ENCODE measurements at regions of chr7 and their contacts with region 1.

Region 1: GRCh38 chr7:27774717-27775328 is 34.9 kb downstream of the TAX1BP1 start:
- DNase-seq: peak; percentile 12
- ATAC-seq: no peak
- H3K4me3 ChIP-seq: no peak overlapping the region
- H3K27ac ChIP-seq: no peak overlapping the region
- H3K4me1 ChIP-seq: peaks cover 15 to 25% of the 10 kb centered on the region in 2 experiments
- H3K27me3 ChIP-seq: no peaks in the 10 kb centered on the region
- CTCF ChIP-seq: peak; percentile 52 to 70 (median 58); a peak in 5 of 6 replicates
- POLR2A ChIP-seq: no peak
- RAD21 ChIP-seq: peak; percentile 69

Region 2: DNA sequence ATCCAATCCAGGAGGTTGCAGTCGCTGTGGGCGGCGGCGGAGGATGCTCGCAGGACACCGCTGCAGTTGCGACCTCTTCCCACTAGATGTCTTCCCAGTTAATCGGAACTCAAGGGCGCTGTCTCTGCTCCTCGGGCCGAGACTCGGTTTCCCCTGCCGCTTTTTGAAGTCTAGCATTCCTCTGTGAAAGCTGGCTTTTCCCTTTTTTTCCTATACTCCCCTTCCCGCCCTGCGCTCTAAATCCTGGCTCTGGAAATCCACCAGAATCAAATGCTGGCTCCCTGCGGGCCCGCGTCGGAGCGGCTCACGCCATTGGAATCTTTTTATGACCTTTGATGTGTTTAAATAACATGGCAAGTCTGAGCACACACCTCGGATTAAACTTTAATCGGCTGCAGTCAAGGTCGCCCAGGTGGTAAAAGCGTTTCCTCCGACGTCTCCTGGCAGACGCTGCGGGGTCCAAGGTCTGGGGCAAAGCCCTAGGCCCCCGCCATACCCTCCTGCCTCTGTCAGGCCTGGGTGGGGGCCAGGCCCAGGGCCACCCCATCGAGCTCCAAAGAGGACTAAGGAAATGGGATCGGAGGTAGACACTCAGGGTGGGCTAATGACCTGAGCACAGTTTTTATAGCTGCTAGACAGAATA is 564.3 kb before region 1 on chr7:
- CTCF ChIA-PET with region 1: no interaction called
- POLR2A ChIA-PET with region 1: no interaction called
- RAD21 ChIA-PET with region 1: no interaction called
- intact Hi-C with region 1: loop called (anchors 2 kb)
- DNase-seq: no peak
- ATAC-seq: peak; percentile 95
- H3K4me3 ChIP-seq: peak overlapping the region; percentile 28 to 43
- H3K27ac ChIP-seq: no peak overlapping the region
- H3K4me1 ChIP-seq: peaks cover 4 to 14% of the 10 kb centered on the region in 2 experiments; a peak in 3 of 4 replicates
- H3K27me3 ChIP-seq: no peaks in the 10 kb centered on the region
- CTCF ChIP-seq: peak; percentile 75 to 80 (median 78)
- POLR2A ChIP-seq: no peak
- RAD21 ChIP-seq: peak; percentile 80

Region 3: DNA sequence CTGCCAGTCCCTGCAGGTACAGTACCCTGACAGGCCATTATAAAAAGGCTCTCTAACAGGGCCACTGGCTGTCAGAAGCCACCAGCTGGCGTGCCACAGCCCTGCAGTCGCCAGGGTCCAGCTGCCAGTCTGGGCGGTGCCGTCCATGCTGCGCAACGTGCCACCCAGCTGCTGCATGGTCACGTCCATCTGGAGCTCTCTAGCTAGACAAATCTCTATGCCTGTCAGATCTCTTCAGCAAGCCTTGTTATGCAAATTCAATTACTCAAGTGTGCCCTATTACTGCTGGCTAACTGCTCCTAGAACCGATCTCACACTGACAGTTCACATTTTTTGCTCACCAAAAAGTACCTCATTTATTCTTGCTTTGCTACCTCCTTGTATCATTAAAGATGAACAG is 188.0 kb before region 1 on chr7:
- CTCF ChIA-PET with region 1: no interaction called
- POLR2A ChIA-PET with region 1: no interaction called
- RAD21 ChIA-PET with region 1: no interaction called
- intact Hi-C with region 1: loop called (anchors 10 kb)
- DNase-seq: no peak
- ATAC-seq: no peak; the same call in 1 of the 2 replicates
- H3K4me3 ChIP-seq: no peak overlapping the region
- H3K27ac ChIP-seq: no peak overlapping the region
- H3K4me1 ChIP-seq: no peaks in the 10 kb centered on the region
- H3K27me3 ChIP-seq: no peaks in the 10 kb centered on the region
- CTCF ChIP-seq: no peak
- POLR2A ChIP-seq: no peak
- RAD21 ChIP-seq: no peak

Region 4: GRCh38 chr7:27689591-27690164 is 85.1 kb before region 1 on chr7:
- CTCF ChIA-PET with region 1: interaction called, 6 read pairs
- POLR2A ChIA-PET with region 1: no interaction called
- RAD21 ChIA-PET with region 1: interaction called in 1 of 2 experiments, 4 read pairs
- intact Hi-C with region 1: loop called (anchors 5 kb)
- DNase-seq: no peak
- ATAC-seq: peak; percentile 95
- H3K4me3 ChIP-seq: no peak overlapping the region
- H3K27ac ChIP-seq: no peak overlapping the region
- H3K4me1 ChIP-seq: peaks cover 0 to 13% of the 10 kb centered on the region in 2 experiments; a peak in 2 of 4 replicates
- H3K27me3 ChIP-seq: no peaks in the 10 kb centered on the region
- CTCF ChIP-seq: peak; percentile 53 to 69 (median 66)
- POLR2A ChIP-seq: no peak
- RAD21 ChIP-seq: peak; percentile 85

Region 5: DNA sequence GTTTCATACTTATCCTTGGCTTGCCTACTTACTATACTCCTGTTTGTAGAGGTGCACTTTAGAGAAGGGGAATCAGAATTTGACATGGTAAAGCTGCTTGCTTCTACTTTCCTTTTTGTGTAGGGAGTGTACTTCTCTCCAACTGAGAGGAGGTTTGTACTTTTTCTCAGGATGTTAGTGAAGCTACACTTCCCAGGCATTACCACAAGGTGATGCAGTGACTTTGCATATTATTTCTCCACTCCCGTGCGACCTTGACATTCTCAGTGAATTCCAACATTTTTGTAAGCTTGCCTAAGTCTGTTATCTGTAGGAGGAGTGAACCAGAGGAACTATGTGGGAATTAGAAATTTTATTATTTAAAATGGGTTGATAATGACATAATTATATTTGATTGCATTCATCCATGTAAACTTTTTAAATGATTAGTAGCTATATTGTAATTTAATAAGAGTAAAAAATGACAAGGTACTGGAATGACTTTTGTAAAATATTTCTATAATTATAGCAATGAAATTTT is 29.7 kb before region 1 on chr7:
- CTCF ChIA-PET with region 1: interaction called, 22 read pairs
- POLR2A ChIA-PET with region 1: interaction called, 5 read pairs
- RAD21 ChIA-PET with region 1: interaction called, 4 to 5 read pairs
- intact Hi-C with region 1: no loop called
- DNase-seq: peak; percentile 48
- ATAC-seq: peak; percentile 55
- H3K4me3 ChIP-seq: no peak overlapping the region
- H3K27ac ChIP-seq: peak overlapping the region; percentile 46; the same call in 1 of the 2 replicates
- H3K4me1 ChIP-seq: peaks cover 13 to 20% of the 10 kb centered on the region in 2 experiments
- H3K27me3 ChIP-seq: no peaks in the 10 kb centered on the region
- CTCF ChIP-seq: peak; percentile 68 to 71 (median 68)
- POLR2A ChIP-seq: no peak
- RAD21 ChIP-seq: peak; percentile 76

Region 6: DNA sequence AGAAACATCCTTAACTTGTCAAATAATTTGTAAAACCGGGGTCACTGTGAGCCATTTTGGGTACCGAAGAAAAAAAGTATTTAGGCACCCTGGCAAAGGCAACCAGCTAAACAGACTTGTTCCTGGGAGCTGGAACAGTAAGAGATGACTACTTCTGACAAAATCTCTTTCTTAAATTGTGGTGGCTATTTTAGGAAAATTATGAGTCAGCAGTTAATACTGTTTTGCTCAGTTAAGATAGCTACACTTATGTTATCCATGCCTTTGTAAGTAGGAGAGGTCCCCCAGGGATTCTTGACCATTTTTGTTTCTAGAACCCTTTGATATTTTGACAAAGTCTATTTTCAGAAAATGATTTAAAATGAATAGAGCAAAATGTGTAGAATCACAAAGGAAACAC is 33.8 kb after region 1 on chr7:
- CTCF ChIA-PET with region 1: no interaction called
- POLR2A ChIA-PET with region 1: no interaction called
- RAD21 ChIA-PET with region 1: no interaction called
- intact Hi-C with region 1: no loop called
- DNase-seq: no peak
- ATAC-seq: no peak
- H3K4me3 ChIP-seq: no peak overlapping the region
- H3K27ac ChIP-seq: no peak overlapping the region
- H3K4me1 ChIP-seq: peaks cover 3 to 7% of the 10 kb centered on the region in 2 experiments; a peak in 3 of 4 replicates
- H3K27me3 ChIP-seq: no peaks in the 10 kb centered on the region
- CTCF ChIP-seq: no peak
- POLR2A ChIP-seq: no peak
- RAD21 ChIP-seq: no peak